ENCODE measurements at regions of chr17 and their contacts with region 1.

Region 1: GRCh38 chr17:80101011-80101945 is at the start of gene GAA:
- DNase-seq: peak; percentile 68
- H3K4me3 Mint-ChIP-seq: peak within 1 kb of the TSS; percentile 79
- H3K27ac Mint-ChIP-seq: peak within 1 kb of the TSS; percentile 67
- H3K4me1 Mint-ChIP-seq: peaks cover 18% of the 10 kb centered on the region
- H3K27me3 Mint-ChIP-seq: no peaks in the 10 kb centered on the region
- CTCF ChIP-seq: peak; percentile 69
- total RNA-seq, gene GAA: 26.0 and 31.3 TPM in 2 replicates

Region 2: DNA sequence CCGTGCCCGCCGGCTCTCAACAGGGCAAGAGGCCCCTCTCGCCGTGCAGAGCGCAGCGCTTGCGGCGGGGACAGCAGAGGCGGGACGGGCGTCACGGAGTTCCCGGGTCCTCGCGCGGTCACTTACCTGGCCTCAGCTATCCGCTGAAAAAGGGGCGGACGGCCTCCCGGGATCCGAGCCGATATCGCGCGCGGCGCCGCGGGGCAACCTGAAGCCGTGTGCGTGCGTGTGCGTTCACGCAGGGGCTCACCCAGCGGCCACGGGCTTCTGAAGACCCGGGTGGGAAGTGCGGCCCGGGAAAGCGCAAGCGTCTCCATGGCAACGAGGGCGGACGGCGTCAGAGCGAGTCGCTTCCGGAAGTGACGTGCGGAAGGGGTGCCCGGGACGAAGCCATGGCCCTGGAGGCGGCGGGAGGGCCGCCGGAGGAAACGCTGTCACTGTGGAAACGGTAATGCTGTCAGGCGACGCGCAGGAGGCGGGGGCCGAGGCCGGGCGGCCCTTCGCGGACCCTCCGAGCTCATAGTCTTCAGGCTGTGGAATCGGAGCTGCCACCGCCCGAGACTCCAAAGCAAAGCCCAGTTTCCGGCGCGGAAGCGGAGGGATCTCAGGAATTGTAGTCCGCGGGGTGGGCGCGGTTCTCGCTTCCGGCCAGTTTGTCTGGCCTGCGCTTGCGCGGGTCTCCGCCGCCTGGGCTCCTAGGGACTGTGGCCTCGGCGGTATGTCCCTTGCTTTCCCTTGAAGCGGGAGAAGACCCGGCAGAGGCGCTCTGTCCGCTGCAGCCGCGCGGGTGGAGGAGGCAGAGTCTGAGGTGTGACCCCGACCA is 313.7 kb after region 1 on chr17 and contains the start of gene ENDOV:
- CTCF ChIA-PET with region 1: interaction called, 3 read pairs
- POLR2A ChIA-PET with region 1: no interaction called
- intact Hi-C with region 1: loop called (anchors 10 kb)
- DNase-seq: peak; percentile 92
- H3K4me3 Mint-ChIP-seq: peak within 1 kb of the TSS; percentile 72
- H3K27ac Mint-ChIP-seq: peak within 1 kb of the TSS; percentile 96
- H3K4me1 Mint-ChIP-seq: peaks cover 30% of the 10 kb centered on the region
- H3K27me3 Mint-ChIP-seq: no peaks in the 10 kb centered on the region
- CTCF ChIP-seq: no peak
- total RNA-seq, gene ENDOV: 28.0 and 34.4 TPM in 2 replicates